ENCODE measurements at regions of chr2 and their contacts with region 1.

Region 1: DNA sequence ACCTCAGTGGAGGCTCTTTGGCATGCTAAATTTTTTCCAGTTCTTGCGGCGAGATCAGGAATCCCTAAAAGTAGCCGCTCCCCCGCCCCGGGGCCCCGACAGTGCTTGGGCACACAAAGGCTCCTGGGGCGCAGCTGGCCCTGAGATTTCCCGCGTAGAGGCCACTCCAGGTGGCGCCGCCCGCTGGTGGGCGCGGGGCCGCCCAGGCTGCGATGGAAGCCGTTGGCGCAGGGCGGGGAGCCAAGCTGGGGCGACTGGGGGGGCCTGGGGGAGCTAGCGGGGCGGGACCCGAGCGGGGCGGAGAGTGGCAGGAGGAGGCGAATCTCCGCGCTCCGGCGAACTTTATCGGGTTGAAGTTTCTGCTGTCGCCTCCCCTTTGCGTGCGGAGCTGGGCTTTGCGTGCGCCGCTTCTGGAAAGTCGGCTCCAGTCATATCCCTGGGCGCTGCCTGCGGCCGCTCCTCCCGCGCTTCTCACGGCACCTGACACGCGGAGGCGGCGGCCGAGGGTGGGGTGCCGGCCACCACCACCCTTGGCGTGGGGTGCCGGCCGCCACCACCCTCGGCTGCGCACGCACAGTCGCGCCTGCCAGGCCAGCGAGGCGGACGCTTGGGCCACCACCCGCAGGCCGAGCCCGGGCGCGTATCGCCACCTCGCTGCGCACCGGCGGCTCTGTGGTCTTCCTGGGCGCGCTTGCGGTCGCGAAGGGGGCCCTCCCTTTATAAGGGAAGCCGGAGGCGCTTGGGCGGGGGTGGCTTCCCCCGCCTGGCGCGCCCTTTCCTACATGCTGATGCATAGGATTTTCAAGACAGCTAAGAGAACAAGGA is 867 bp upstream of the CYP1B1 start:
- DNase-seq: peak; percentile 89

Region 2: GRCh38 chr2:37982147-37982582 is 94.7 kb before region 1 on chr2:
- intact Hi-C with region 1: loop called (anchors 10 kb)
- DNase-seq: no peak

Region 3: GRCh38 chr2:38095996-38096861 is 19.4 kb after region 1 on chr2:
- intact Hi-C with region 1: loop called (anchors 2 kb)
- DNase-seq: peak; percentile 86

Region 4: GRCh38 chr2:38115216-38116032 is 38.6 kb after region 1 on chr2:
- intact Hi-C with region 1: loop called (anchors 1 kb)
- DNase-seq: peak; percentile 90

Region 5: GRCh38 chr2:38178547-38179419 is 102.0 kb after region 1 on chr2:
- intact Hi-C with region 1: loop called (anchors 5 kb)
- DNase-seq: no peak

Region 6: GRCh38 chr2:38274286-38275276 is 197.8 kb after region 1 on chr2:
- intact Hi-C with region 1: loop called (anchors 10 kb)
- DNase-seq: no peak